ENCODE measurements at regions of chr20 and their contacts with region 1.

Region 1: DNA sequence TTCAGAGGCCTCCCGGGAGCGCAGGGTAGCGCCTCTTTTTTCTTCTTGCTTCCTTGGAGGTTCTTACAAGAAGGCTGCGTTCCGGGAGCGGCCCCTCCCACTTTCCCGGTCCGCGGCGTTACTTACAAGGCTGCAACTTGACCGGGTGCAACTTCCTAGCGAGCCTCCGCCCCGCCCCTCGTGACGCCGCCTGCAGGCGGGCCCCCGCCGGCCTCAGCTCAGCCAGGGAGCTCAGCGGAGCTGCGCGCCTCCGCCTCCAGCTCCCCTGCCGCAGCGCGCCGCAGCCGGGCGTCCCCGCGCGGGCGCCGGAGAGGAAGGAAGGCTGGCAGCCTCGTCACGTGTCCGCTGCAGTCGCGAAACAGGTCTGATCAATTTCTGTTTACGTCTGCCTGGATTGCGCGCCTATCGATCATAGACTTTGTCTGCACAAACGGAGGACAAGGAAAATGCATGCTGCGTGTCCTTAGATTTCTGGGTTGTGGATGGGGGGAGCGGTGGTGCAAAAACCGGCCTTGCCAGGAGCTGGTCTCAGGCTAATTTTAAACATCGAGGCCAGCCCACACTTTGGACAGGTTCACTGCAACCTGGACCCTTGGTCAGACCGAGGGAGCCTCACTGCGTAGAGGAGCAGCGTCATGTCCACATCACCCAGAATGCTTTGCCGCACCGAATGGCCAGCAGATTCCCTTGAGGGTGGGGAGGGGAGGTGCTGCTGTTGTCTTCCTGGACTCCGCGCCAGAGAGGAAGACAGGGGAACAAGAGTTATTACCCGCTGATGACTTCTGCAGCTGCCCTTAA is at the starts of genes FAM217B and PPP1R3D:
- DNase-seq: peak; percentile 90
- H3K4me3 ChIP-seq: peak within 1 kb of the TSS; percentile 77
- CTCF ChIP-seq: peak; percentile 29

Region 2: GRCh38 chr20:59866338-59866737 is 74.0 kb before region 1 on chr20:
- CTCF ChIA-PET with region 1: no interaction called
- POLR2A ChIA-PET with region 1: no interaction called
- DNase-seq: no peak
- H3K4me3 ChIP-seq: no peak overlapping the region
- CTCF ChIP-seq: no peak

Region 3: GRCh38 chr20:59955132-59955796 is 14.9 kb after region 1 on chr20:
- CTCF ChIA-PET with region 1: interaction called, 30 read pairs
- POLR2A ChIA-PET with region 1: no interaction called
- DNase-seq: no peak
- H3K4me3 ChIP-seq: no peak overlapping the region
- CTCF ChIP-seq: peak; percentile 16